ENCODE measurements at regions of chr1 and their contacts with region 1.

Region 1: DNA sequence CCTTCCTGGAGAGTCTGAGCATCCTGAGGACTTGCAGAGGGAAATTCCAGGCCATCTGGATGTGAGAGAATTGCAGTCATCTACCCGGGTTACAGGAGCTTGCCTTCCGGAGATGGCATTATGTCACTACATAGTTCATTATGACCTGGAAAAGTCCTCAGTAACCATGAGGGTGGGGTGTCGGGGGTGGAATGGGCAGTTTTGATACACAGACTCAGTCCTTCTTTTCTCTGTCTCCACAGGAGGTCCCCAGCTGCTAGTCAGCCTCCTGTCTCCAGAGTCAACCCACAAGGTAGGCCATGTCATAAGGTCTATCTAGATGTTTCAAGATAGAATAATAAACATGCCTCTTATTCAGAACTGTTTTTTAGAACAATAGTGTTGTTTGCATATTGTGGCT is 268.2 kb upstream of the SGIP1 start:
- DNase-seq: no peak
- ATAC-seq: peak in 7 of 8 donors; percentile 34 to 84 (median 52)
- H3K4me3 ChIP-seq: no peak overlapping the region
- H3K27ac ChIP-seq: peak overlapping the region in 6 of 10 donors; percentile 8 to 73 (median 44)
- H3K4me1 ChIP-seq: peaks cover 4 to 84% (median 45%) of the 10 kb centered on the region in 9 donors
- H3K27me3 ChIP-seq: no peaks in the 10 kb centered on the region
- CTCF ChIP-seq: peak in 2 of 9 donors; percentile 22 to 26

Region 2: DNA sequence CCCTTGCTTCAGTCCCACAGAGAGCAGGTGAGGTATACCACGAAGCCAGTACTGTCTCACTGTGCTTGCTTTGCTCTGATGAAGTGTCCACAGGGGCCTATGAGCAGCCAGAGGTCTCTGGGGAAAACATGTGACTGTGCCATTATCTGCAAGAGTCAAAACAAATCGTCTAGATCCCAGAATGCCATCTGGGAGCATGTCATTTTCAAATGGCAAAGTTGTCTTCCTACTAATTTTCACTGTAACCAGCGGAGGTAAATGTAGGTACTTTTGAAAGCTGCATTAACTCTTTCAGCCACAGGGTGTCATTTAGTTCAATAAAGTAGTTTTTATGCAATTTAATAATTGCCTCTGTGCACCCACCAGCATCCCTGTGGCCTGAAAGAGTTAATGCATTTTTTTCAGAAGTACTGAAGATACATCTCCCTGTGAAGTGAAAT is 94.5 kb after region 1 on chr1:
- intact Hi-C with region 1: no loop called
- DNase-seq: no peak
- ATAC-seq: peak in 5 of 8 donors; percentile 49 to 69 (median 56)
- H3K4me3 ChIP-seq: no peak overlapping the region
- H3K27ac ChIP-seq: peak overlapping the region in 3 of 10 donors; percentile 12 to 43 (median 19)
- H3K4me1 ChIP-seq: peaks cover 0 to 50% (median 21%) of the 10 kb centered on the region in 9 donors
- H3K27me3 ChIP-seq: no peaks in the 10 kb centered on the region
- CTCF ChIP-seq: peak in 1 of 9 donors; percentile 25

Region 3: DNA sequence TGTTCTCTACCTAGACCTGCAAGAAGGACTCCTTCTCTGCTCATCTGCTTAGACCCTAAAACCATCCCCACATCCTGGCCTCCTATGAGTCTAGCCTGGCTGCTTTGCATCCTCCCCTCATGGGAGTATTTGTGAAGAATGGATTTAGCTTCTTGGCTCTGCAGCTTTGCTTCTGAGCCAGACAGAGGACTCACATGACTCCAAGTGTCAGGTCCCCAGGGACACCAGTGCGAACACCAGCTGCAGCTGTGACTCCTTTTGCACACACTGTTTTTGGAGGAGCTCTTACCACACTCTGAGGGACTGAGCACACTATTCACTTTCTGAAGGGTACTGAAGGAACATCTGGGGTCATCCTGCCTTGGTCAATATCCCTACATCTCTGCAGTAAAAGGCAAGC is 136.4 kb after region 1 on chr1:
- intact Hi-C with region 1: loop called in 1 of 10 experiments (anchors 1 kb)
- DNase-seq: peak; percentile 68 to 88
- ATAC-seq: peak; percentile 85 to 97 (median 94)
- H3K4me3 ChIP-seq: no peak overlapping the region
- H3K27ac ChIP-seq: peak overlapping the region in 8 of 10 donors; percentile 13 to 76 (median 28)
- H3K4me1 ChIP-seq: peaks cover 9 to 34% (median 20%) of the 10 kb centered on the region in 9 donors
- H3K27me3 ChIP-seq: no peaks in the 10 kb centered on the region
- CTCF ChIP-seq: no peak